PC-3 (cell line): ENCODE measurements at regions of chr16 and their contacts with region 1.

Region 1: GRCh38 chr16:68040507-68041288 is 17.6 kb downstream of the DUS2 start:
- DNase-seq: peak; percentile 60
- ATAC-seq: peak; percentile 90
- H3K4me3 ChIP-seq: no peak overlapping the region
- H3K27ac ChIP-seq: no peak overlapping the region
- H3K4me1 ChIP-seq: no peaks in the 10 kb centered on the region
- H3K27me3 ChIP-seq: no peaks in the 10 kb centered on the region
- CTCF ChIP-seq: peak; percentile 81

Region 2: DNA sequence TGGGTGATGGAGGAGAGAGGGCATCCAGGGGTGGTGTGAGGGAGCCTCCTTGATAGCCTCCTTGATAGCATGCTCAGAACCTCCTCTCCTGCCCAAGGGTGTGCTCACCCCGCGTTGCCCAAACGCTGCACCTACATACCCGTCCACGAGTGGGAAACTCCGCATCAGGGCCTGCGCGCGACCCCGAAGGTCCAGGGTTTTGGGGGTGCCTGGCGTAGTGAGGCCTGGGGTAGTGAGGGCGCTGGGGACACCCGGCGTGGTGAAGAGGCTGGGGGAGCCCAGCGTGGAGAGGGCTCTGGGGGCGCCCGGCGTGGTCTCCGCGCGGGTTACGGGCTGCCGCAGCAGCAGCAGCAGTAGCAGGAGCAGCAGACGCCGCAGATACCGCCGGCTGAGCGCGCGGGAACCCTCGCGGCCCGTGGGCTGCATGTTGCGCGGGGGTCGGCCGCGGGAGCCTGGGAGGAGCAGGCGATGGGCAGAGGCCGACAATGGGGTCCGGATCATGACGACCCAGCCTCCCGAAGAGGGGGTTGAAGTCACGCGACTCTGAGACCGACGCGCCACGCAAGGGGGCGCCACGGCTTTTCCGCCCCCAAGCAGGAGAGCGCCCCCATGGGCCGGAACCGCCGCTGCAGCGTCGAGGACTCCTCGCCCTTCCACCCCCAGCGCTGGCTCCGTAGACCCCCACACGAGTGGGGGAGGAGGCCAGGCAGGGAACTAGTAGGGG is 60.6 kb before region 1 on chr16 and contains the start of gene DPEP3:
- CTCF ChIA-PET with region 1: no interaction called
- POLR2A ChIA-PET with region 1: no interaction called
- intact Hi-C with region 1: no loop called
- DNase-seq: no peak
- ATAC-seq: no peak
- H3K4me3 ChIP-seq: no peak within 1 kb of the TSS
- H3K27ac ChIP-seq: no peak within 1 kb of the TSS
- H3K4me1 ChIP-seq: no peaks in the 10 kb centered on the region
- H3K27me3 ChIP-seq: no peaks in the 10 kb centered on the region
- CTCF ChIP-seq: no peak
- total RNA-seq, gene DPEP3: not detected in 2 replicates

Region 3: GRCh38 chr16:67993189-67994039 is 47.3 kb before region 1 on chr16:
- CTCF ChIA-PET with region 1: no interaction called
- POLR2A ChIA-PET with region 1: no interaction called
- intact Hi-C with region 1: loop called (anchors 1 kb)
- DNase-seq: peak; percentile 66
- ATAC-seq: peak; percentile 96
- H3K4me3 ChIP-seq: no peak overlapping the region
- H3K27ac ChIP-seq: no peak overlapping the region
- H3K4me1 ChIP-seq: peaks cover 4% of the 10 kb centered on the region; the same call in 1 of the 2 replicates
- H3K27me3 ChIP-seq: no peaks in the 10 kb centered on the region
- CTCF ChIP-seq: peak; percentile 79